ENCODE measurements at regions of chr15 and their contacts with region 1.

Region 1: GRCh38 chr15:89740137-89740536 is 10.9 kb downstream of the MESP1 start:
- DNase-seq: peak; percentile 72
- ATAC-seq: peak; percentile 88
- H3K4me3 ChIP-seq: no peak overlapping the region
- H3K27ac ChIP-seq: no peak overlapping the region
- H3K4me1 ChIP-seq: no peaks in the 10 kb centered on the region
- H3K27me3 ChIP-seq: peaks cover 2 to 39% of the 10 kb centered on the region in 2 experiments; a peak in 4 of 5 replicates
- CTCF ChIP-seq: peak; percentile 92
- EP300 ChIP-seq: no peak
- POLR2A ChIP-seq: no peak
- RAD21 ChIP-seq: peak; percentile 84

Region 2: DNA sequence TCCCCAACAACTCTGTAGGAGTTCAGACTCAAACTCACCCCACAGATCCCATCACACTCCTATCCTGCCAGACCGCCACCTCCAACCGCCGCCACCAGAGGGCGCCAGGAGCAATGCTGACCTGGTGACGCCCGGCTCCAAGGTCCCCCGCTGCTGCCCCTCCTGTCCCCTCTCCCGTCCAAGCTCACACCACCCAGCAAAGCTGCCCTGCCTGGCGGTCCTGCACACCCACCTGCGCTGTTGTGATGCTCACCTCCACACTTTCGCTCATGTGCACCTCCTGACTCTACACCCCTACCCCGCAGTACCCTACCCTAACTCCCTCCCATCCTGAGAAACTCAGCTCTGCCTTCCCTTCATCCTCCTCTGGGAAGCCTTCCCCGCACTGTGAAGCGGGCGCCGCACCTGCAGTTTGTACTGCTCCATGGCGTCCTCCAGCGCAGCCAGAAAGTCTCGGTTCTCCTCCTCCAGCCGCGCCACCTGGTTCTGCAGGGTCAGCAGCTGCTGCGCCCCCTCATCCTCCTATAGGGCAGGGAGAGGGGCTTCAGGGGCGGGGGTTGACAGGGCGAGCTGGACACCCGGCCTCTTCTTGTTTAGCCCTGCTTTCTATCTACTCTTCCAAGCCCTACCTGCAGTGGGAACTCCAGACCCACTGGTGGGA is 92.8 kb before region 1 on chr15:
- CTCF ChIA-PET with region 1: no interaction called
- POLR2A ChIA-PET with region 1: no interaction called
- in situ Hi-C with region 1: no loop called
- intact Hi-C with region 1: no loop called
- DNase-seq: peak; percentile 57
- ATAC-seq: peak; percentile 95
- H3K4me3 ChIP-seq: peak overlapping the region in 1 of 3 experiments; percentile 32; a peak in 1 of 6 replicates
- H3K27ac ChIP-seq: no peak overlapping the region
- H3K4me1 ChIP-seq: peaks cover 6% of the 10 kb centered on the region; the same call in 1 of the 2 replicates
- H3K27me3 ChIP-seq: no peaks in the 10 kb centered on the region
- CTCF ChIP-seq: peak; percentile 94
- EP300 ChIP-seq: no peak
- POLR2A ChIP-seq: no peak
- RAD21 ChIP-seq: peak; percentile 84

Region 3: GRCh38 chr15:89888214-89888804 is 148.2 kb after region 1 on chr15:
- CTCF ChIA-PET with region 1: interaction called, 26 read pairs
- POLR2A ChIA-PET with region 1: no interaction called
- in situ Hi-C with region 1: no loop called
- intact Hi-C with region 1: loop called (anchors 1 kb)
- DNase-seq: peak; percentile 56
- ATAC-seq: peak; percentile 71
- H3K4me3 ChIP-seq: no peak overlapping the region
- H3K27ac ChIP-seq: no peak overlapping the region
- H3K4me1 ChIP-seq: peaks cover 14% of the 10 kb centered on the region; the same call in 1 of the 2 replicates
- H3K27me3 ChIP-seq: no peaks in the 10 kb centered on the region
- CTCF ChIP-seq: peak; percentile 60
- EP300 ChIP-seq: no peak
- POLR2A ChIP-seq: no peak
- RAD21 ChIP-seq: peak; percentile 43; the same call in 1 of the 2 replicates

Region 4: DNA sequence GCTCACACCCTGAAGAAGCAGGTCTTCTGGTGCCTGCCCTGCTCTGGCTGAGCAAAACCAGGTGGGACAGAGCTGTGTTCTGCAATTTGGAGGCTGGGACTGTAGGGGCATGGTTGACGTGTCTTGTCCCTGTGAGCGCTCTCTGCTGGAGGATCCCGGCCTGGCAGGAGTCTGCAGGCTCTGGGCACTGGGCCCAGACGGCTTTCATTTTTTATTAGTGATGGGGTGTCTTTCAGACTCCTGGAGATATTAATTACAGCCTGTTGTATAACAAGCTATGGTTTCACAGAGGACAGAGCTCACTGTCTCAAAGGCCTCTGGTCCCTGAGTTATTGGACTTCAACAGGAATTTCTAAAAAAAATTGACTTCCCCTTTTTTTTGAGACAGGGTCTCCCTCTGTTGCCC is 231.5 kb after region 1 on chr15:
- CTCF ChIA-PET with region 1: no interaction called
- POLR2A ChIA-PET with region 1: no interaction called
- in situ Hi-C with region 1: no loop called
- intact Hi-C with region 1: loop called (anchors 2 kb)
- DNase-seq: peak; percentile 62
- ATAC-seq: peak; percentile 100
- H3K4me3 ChIP-seq: no peak overlapping the region
- H3K27ac ChIP-seq: no peak overlapping the region
- H3K4me1 ChIP-seq: no peaks in the 10 kb centered on the region; the same call in none of the 2 replicates
- H3K27me3 ChIP-seq: no peaks in the 10 kb centered on the region
- CTCF ChIP-seq: peak; percentile 75
- EP300 ChIP-seq: no peak
- POLR2A ChIP-seq: no peak
- RAD21 ChIP-seq: peak; percentile 75; the same call in 1 of the 2 replicates

Region 5: GRCh38 chr15:90086868-90087268 is 346.7 kb after region 1 on chr15:
- CTCF ChIA-PET with region 1: no interaction called
- POLR2A ChIA-PET with region 1: no interaction called
- in situ Hi-C with region 1: loop called (anchors 25 kb)
- intact Hi-C with region 1: no loop called
- DNase-seq: peak; percentile 44
- ATAC-seq: peak; percentile 68
- H3K4me3 ChIP-seq: no peak overlapping the region
- H3K27ac ChIP-seq: no peak overlapping the region
- H3K4me1 ChIP-seq: no peaks in the 10 kb centered on the region
- H3K27me3 ChIP-seq: no peaks in the 10 kb centered on the region
- CTCF ChIP-seq: peak; percentile 81
- EP300 ChIP-seq: no peak
- POLR2A ChIP-seq: no peak
- RAD21 ChIP-seq: peak; percentile 79